Posterior cingulate gyrus (tissue), 11 donors: ENCODE measurements at regions of chr16 and their contacts with region 1.

Region 1: DNA sequence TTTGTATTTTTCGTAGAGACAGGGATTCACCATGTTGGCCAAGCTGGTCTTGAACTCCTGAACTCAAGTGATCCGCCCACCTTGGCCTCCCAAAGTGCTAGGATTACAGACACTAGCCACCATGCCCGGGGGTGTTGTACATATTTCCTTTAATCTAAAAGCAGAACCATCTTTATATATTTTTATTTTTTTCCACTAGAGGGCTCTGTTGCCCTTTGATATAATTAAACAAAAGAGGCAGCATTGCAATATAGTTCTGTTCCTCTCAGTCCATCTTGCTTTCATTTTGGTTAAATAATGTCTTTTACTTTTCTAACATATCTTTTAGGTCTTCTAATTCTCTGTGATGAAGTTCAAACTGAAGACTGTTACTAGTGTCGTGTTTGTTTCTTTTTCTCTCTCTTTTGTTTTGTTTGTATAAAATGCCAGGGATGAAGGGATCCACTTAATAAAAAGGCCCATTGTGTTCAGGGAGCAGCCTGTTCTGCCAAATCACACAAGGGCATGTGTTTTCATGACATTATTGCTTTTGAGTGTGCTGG is 23.4 kb downstream of the WWOX start:
- DNase-seq: peak in 2 of 10 donors; percentile 37 to 49

Region 2: GRCh38 chr16:78022347-78023060 is 100.3 kb before region 1 on chr16 and contains the start of gene CLEC3A:
- intact Hi-C with region 1: no loop called
- DNase-seq: no peak

Region 3: GRCh38 chr16:78235168-78235800 is 112.4 kb after region 1 on chr16:
- intact Hi-C with region 1: loop called (anchors 2 kb)
- DNase-seq: peak; percentile 38 to 96 (median 73)

Region 4: GRCh38 chr16:78770353-78771091 is 647.7 kb after region 1 on chr16:
- intact Hi-C with region 1: loop called (anchors 10 kb)
- DNase-seq: peak in 9 of 10 donors; percentile 25 to 96 (median 70)